ENCODE measurements at regions of chr14 and their contacts with region 1.

Region 1: DNA sequence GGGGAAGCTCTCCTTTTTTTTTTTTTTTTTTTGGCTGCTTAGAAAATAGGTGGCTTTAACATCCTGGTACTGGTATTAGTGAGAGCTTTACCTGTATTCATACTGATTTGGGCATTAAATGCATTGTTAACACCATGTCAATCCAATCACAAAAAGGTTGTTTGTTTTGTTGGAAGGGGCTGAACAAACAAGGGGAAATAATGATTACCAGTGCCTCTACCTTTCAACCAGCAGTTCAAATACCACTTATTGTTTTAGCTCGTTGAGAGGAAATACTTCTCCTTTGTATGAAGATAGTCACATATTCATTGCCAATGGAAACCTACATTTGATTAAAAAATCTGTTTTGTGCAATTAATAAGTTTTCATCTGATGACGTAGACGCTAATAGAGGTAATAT is 72.9 kb downstream of the MIPOL1 start:
- DNase-seq: no peak
- H3K27ac ChIP-seq: no peak overlapping the region
- CTCF ChIP-seq: no peak

Region 2: DNA sequence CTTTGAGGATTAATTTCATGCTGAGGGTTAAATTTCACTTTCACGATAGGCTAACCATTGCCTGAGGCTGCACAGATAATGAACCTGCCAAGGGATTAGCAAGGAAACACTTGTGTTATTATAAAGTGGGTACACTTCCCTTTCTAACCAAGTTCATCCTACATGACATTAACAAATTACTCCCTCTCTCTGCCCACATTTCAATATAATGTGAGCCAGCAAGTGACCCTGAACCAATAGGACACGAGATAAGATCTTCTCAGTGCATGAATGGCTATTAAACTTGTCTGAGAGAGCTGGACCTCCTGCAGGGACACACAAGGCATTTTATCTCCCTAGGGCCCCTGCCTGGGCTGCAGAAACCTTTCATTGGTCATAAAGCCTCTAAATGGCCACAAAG is 435.5 kb before region 1 on chr14:
- CTCF ChIA-PET with region 1: no interaction called
- POLR2A ChIA-PET with region 1: no interaction called
- DNase-seq: no peak
- H3K27ac ChIP-seq: no peak overlapping the region
- CTCF ChIP-seq: no peak

Region 3: DNA sequence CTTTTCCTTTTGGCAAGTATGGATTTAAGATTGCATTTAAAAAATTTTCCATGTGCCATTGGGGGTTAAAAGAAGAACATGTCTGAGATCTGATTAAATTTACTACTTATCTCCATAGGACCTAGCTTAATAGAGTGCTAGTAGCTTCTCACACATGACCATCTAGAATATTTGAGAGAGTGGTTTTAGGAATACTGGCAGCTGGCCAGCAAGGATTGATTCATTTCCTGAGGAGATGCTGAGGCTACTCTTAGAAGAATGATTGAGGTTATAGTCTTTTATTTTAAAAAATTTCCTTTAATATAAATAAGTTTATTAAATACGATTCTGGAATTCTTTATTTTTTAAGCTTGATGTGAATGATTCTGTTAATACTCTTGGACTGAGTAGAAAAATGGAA is 16.7 kb before region 1 on chr14:
- CTCF ChIA-PET with region 1: interaction called, 10 read pairs
- POLR2A ChIA-PET with region 1: no interaction called
- DNase-seq: peak; percentile 22
- H3K27ac ChIP-seq: no peak overlapping the region
- CTCF ChIP-seq: no peak